PC-9 (cell line): ENCODE measurements at regions of chr1 and their contacts with region 1.

Region 1: GRCh38 chr1:145720877-145721671 is 1.8 kb downstream of the CD160 start:
- DNase-seq: peak in 1 of 2 experiments; percentile 76
- H3K4me3 ChIP-seq: peak overlapping the region; percentile 25; the same call in 1 of the 2 replicates
- H3K27ac ChIP-seq: no peak overlapping the region
- H3K4me1 ChIP-seq: peaks cover 6% of the 10 kb centered on the region
- H3K27me3 ChIP-seq: no peaks in the 10 kb centered on the region
- CTCF ChIP-seq: peak; percentile 92

Region 2: DNA sequence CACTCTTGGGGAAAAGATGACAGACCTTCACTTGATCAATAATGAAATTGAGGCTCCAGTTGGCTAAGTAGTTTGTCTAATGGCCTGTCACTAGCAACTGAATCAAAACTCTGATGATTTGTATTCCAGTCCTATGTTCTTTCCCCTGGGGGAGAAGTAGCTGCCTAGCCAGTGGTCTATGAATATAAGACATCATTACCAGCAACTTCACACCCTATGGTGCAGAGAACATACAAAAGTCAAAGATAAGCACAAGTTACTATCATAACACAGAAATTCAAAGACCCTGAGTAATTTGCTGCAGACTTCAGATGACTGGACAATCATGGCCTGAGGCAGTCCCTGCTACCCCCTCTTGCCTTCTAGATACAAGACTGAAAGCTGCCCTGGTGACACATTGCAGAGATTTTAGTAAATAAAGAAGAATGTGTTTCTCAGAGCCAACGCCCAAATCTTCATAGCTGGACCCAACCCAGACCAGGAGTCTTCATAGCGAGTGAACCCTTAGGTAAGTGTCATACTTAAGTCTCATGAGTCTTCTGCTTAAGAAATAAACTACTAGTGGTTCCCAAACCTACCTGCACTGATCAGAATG is 14.9 kb before region 1 on chr1:
- CTCF ChIA-PET with region 1: interaction called, 3 read pairs
- POLR2A ChIA-PET with region 1: interaction called, 14 read pairs
- intact Hi-C with region 1: no loop called
- DNase-seq: peak; percentile 83 to 99
- H3K4me3 ChIP-seq: no peak overlapping the region
- H3K27ac ChIP-seq: peak overlapping the region; percentile 68
- H3K4me1 ChIP-seq: peaks cover 39% of the 10 kb centered on the region
- H3K27me3 ChIP-seq: no peaks in the 10 kb centered on the region
- CTCF ChIP-seq: no peak

Region 3: GRCh38 chr1:145782166-145783099 is 61.4 kb after region 1 on chr1:
- CTCF ChIA-PET with region 1: no interaction called
- POLR2A ChIA-PET with region 1: interaction called, 11 read pairs
- intact Hi-C with region 1: loop called (anchors 5 kb)
- DNase-seq: peak; percentile 58 to 95
- H3K4me3 ChIP-seq: no peak overlapping the region
- H3K27ac ChIP-seq: peak overlapping the region; percentile 92
- H3K4me1 ChIP-seq: peaks cover 49% of the 10 kb centered on the region
- H3K27me3 ChIP-seq: no peaks in the 10 kb centered on the region
- CTCF ChIP-seq: no peak

Region 4: DNA sequence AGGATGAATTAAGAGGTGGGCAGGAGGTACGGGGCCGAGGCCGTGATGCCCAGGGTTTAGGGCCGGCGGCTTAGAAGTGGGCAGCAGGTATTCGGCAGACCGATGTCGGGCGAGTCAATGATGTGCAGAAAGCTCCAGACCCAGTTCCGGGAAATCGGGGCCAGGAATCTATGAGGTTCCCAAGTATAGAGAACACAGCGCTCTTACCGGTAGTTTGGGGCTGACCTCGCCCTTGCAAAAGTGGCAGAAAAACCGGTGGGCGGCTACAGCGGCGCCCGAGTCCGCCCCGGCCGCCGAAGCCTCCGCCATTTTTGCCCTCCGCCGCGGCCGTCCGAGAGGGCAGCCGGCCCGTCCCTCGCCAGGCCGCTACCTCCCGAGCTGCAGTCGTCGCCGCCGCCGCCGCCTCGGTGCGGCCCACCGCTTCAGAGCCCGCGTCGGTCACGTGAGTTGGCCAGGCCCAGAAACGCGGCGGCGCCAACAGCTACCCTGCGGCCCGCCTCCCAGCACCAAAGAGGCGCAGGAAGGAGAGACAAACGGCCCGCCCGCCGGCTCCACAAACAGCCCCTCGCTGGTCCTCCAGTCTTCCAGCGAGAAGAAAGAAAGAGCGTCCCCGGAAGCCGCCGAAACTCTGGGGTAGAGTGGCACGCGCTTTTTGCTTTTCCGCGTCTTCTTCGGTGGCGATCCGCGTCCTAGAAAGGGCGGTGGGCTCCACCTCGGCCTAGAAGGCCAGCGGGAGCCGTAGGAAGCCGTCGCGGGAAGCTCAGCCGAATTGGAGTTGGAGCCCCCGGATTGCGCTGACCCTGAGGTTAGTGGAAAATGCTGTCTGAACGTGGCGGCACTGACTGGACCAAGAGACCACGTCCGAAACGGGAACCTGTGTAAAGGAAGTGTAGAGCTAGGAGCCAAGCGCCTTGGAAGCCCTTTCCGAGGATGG is 102.8 kb after region 1 on chr1 and contains the starts of genes POLR3C and RNF115:
- CTCF ChIA-PET with region 1: no interaction called
- POLR2A ChIA-PET with region 1: no interaction called
- intact Hi-C with region 1: loop called (anchors 5 kb)
- DNase-seq: peak; percentile 69 to 86
- H3K4me3 ChIP-seq: peak within 1 kb of the TSS; percentile 85
- H3K27ac ChIP-seq: peak within 1 kb of the TSS; percentile 81
- H3K4me1 ChIP-seq: peaks cover 16% of the 10 kb centered on the region
- H3K27me3 ChIP-seq: no peaks in the 10 kb centered on the region
- CTCF ChIP-seq: no peak
- total RNA-seq, gene POLR3C: 21.2 and 21.4 TPM in 2 replicates
- total RNA-seq, gene RNF115: 8.8 and 11.0 TPM in 2 replicates